AG04450 (cell line): ENCODE measurements at regions of chr17 and their contacts with region 1.

Region 1: GRCh38 chr17:15920758-15921239 is 24.1 kb upstream of the ADORA2B start:
- DNase-seq: peak; percentile 94
- H3K4me3 ChIP-seq: no peak overlapping the region
- H3K27ac ChIP-seq: peak overlapping the region; percentile 96
- H3K27me3 ChIP-seq: no peaks in the 10 kb centered on the region
- CTCF ChIP-seq: no peak

Region 2: GRCh38 chr17:15958484-15958854 is 37.7 kb after region 1 on chr17:
- CTCF ChIA-PET with region 1: no interaction called
- POLR2A ChIA-PET with region 1: interaction called, 15 read pairs
- DNase-seq: no peak
- H3K4me3 ChIP-seq: no peak overlapping the region
- H3K27ac ChIP-seq: peak overlapping the region; percentile 87
- H3K27me3 ChIP-seq: no peaks in the 10 kb centered on the region
- CTCF ChIP-seq: no peak

Region 3: GRCh38 chr17:15999439-16000350 is 78.9 kb after region 1 on chr17 and contains the starts of genes TTC19 and ZSWIM7:
- CTCF ChIA-PET with region 1: no interaction called
- POLR2A ChIA-PET with region 1: interaction called, 12 read pairs
- DNase-seq: peak; percentile 81
- H3K4me3 ChIP-seq: peak within 1 kb of the TSS; percentile 80
- H3K27ac ChIP-seq: peak within 1 kb of the TSS; percentile 93
- H3K27me3 ChIP-seq: no peaks in the 10 kb centered on the region
- CTCF ChIP-seq: no peak
- polyA plus RNA-seq, gene TTC19: 5.9 and 6.6 TPM in 2 replicates
- polyA plus RNA-seq, gene ZSWIM7: 17.8 and 22.2 TPM in 2 replicates